ENCODE measurements at regions of chr1 and their contacts with region 1.

Region 1: DNA sequence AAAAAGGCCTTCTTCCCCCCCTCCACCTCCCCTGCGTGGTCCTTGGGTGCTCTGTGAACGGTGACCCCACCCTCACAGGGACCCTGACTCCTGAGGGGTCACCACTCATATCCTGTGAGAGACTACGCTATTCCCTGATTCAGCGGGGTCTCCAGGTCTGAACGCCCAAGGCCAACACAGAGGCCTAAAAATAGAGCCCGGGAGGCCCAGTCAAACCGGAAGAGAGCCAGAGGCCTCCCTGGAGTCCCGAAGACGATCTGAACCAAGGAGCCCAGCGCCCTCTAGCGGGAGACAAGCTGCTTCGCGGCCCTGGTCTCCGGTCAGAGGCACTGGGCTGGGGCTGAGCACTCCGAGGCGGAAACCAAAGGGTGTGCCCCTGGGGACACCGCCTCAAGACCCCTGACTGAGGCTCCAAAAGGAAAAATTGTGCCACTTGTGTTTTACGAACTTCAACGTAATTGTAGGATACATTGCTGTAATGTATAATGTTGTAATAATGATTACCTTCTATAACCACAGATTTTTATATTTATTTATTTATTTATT is 42.4 kb upstream of the PSEN2 start:
- DNase-seq: peak; percentile 96
- H3K4me3 Mint-ChIP-seq: peak overlapping the region; percentile 25
- H3K27ac Mint-ChIP-seq: peak overlapping the region; percentile 80
- H3K4me1 Mint-ChIP-seq: peaks cover 14% of the 10 kb centered on the region
- H3K27me3 Mint-ChIP-seq: peaks cover 4% of the 10 kb centered on the region

Region 2: DNA sequence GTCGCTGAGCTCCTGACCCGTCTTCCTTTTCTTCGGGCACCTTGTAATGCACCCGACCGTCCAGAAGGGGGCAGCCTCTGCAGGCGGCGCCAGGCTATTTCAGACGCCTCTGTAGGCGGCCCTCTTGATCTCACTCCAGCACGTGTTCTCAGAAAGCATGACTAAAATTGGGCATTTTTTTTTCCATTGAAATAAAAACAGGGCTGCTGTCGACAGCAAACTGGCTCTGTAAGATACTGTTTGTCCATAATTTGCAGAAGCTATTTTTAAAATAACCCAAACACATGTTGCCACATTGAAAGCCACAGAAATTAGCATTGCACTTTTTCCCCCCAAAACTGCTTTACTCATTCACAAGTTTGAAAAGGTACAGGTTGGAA is 201.5 kb before region 1 on chr1:
- CTCF ChIA-PET with region 1: interaction called, 45 read pairs
- POLR2A ChIA-PET with region 1: interaction called, 5 read pairs
- DNase-seq: peak; percentile 82
- H3K4me3 Mint-ChIP-seq: no peak overlapping the region
- H3K27ac Mint-ChIP-seq: no peak overlapping the region
- H3K4me1 Mint-ChIP-seq: peaks cover 17% of the 10 kb centered on the region
- H3K27me3 Mint-ChIP-seq: peaks cover 3% of the 10 kb centered on the region